A549 (cell line): ENCODE measurements at regions of chr7 and their contacts with region 1.

Region 1: GRCh38 chr7:31633894-31634494 is 53.0 kb upstream of the PPP1R17 start:
- DNase-seq: peak; percentile 47 to 69
- ATAC-seq: peak; percentile 96
- H3K4me3 ChIP-seq: no peak overlapping the region
- H3K27ac ChIP-seq: no peak overlapping the region
- H3K4me1 ChIP-seq: no peaks in the 10 kb centered on the region
- CTCF ChIP-seq: peak; percentile 76
- EP300 ChIP-seq: no peak
- POLR2A ChIP-seq: no peak
- RAD21 ChIP-seq: peak; percentile 87 to 92

Region 2: GRCh38 chr7:31175672-31176071 is 458.3 kb before region 1 on chr7:
- CTCF ChIA-PET with region 1: interaction called, 10 read pairs
- POLR2A ChIA-PET with region 1: no interaction called
- DNase-seq: peak; percentile 9 to 11
- ATAC-seq: peak; percentile 62 to 77; a peak in 4 of 6 replicates
- H3K4me3 ChIP-seq: no peak overlapping the region
- H3K27ac ChIP-seq: no peak overlapping the region
- H3K4me1 ChIP-seq: no peaks in the 10 kb centered on the region
- CTCF ChIP-seq: 0 out of 3 replicates have a peak, but pooled peaks have one; percentile 18
- EP300 ChIP-seq: no peak
- POLR2A ChIP-seq: no peak
- RAD21 ChIP-seq: no peak

Region 3: DNA sequence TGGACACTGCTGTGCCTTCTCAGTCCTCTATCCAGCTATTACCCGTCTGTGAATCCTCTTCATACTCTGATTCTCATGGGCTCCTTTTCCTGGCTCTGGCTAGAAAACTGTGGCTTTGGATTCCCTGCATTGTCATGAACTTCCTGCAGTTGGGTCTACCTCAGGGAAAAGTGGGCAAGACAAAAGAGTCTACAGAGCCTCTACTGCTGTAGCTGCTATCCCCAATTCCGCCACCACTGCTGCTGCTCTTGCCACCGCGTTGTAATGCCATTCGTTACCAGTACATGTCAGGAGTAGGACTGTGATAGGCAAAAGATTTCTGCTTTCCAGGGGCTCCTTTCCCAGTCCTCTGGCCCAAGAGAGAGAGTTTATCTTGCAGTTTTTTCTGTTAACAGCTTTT is 29.1 kb after region 1 on chr7:
- CTCF ChIA-PET with region 1: no interaction called
- POLR2A ChIA-PET with region 1: no interaction called
- DNase-seq: peak; percentile 6 to 30
- ATAC-seq: peak; percentile 88 to 94
- H3K4me3 ChIP-seq: no peak overlapping the region
- H3K27ac ChIP-seq: no peak overlapping the region
- H3K4me1 ChIP-seq: no peaks in the 10 kb centered on the region
- CTCF ChIP-seq: no peak
- EP300 ChIP-seq: no peak
- POLR2A ChIP-seq: no peak
- RAD21 ChIP-seq: no peak

Region 4: GRCh38 chr7:31811650-31812461 is 177.9 kb after region 1 on chr7:
- CTCF ChIA-PET with region 1: no interaction called
- POLR2A ChIA-PET with region 1: no interaction called
- DNase-seq: no peak
- ATAC-seq: no peak
- H3K4me3 ChIP-seq: no peak overlapping the region
- H3K27ac ChIP-seq: no peak overlapping the region
- H3K4me1 ChIP-seq: peaks cover 6% of the 10 kb centered on the region
- CTCF ChIP-seq: no peak
- EP300 ChIP-seq: no peak
- POLR2A ChIP-seq: no peak
- RAD21 ChIP-seq: no peak